ENCODE measurements at regions of chr5 and their contacts with region 1.

Region 1: GRCh38 chr5:134145779-134146581 is 30.8 kb downstream of the SKP1 start:
- DNase-seq: peak; percentile 61 to 93 (median 85)
- ATAC-seq: peak; percentile 88
- H3K4me3 ChIP-seq: no peak overlapping the region
- H3K4me1 ChIP-seq: no peaks in the 10 kb centered on the region
- CTCF ChIP-seq: peak; percentile 97

Region 2: DNA sequence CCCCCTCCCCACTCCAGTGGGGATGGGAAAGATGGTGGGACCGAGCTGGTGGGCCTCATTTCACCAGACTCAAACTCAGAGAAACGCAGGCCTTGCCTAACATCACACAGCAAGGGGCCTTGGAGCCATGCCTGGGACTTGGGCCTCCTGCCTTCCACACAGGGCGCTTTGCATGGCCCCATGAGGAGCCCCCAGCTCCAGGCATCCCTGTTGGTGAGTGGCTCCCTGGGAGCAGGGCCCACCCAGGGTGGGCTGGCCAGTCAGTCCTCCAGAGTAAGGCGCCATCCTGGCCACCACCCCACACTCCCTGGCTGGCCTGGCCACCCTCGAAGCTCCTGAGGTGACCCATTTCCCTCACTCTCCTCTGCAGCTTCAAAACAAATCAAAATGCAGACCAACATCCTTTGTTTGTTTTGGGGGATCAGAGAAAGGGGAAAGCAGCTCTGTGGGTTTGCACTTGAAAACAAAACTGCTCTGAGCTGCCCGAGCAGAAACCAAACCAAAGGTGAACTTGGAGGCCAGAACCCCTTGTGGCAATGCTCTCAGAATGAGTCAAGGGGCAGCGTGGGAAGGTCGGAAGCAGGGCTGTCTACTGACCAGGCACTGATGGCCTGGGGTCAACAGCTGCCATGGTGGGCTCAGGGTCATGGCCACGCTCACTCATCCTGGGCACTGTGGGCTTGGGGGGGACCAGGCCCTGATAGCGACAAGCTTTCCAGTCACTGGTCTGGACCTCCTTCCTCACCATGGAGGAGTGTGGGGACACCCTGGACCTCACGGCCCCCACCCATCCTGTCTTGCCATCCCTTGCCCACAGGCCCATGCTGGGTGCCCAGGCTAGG is 104.2 kb before region 1 on chr5:
- intact Hi-C with region 1: loop called (anchors 10 kb)
- DNase-seq: no peak
- ATAC-seq: no peak
- H3K4me3 ChIP-seq: no peak overlapping the region
- H3K4me1 ChIP-seq: no peaks in the 10 kb centered on the region
- CTCF ChIP-seq: no peak

Region 3: DNA sequence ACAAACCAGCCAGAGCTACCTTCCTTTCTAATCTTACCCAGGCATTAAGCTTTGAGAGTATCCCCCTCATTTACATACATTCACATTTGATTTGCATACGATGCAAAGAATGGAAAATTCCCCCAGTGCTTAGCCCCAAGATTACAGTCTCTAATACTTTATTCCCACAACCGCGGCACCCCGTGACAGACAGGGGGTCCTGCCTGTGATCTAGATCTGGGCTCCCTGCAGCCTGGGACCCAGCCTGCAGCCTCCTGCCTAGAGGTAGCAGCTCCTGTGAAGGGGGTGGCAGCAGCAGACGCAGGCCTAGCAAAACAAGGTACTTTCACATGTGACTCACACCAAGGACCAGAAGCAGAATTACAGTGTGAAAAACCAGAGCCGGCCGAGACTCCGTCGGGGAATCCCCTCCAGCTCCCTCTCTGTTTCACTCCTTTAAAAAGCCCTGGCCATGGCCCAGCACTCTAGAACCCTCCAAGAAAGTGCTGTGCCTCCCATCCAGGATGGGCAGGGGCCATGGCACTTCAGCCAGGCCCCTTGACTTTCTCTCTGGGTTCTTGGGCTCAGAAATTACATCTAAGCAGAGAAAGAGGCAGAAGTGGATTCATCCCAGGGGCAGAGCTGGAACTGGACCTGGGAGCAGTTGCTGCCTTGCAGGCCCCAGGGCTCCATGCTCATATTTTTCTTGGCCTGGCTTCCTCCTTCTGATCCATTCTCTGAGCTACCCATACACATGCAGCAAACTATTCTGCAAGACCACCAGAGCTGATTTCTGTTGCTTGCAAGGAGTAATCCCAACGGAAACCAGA is 45.5 kb before region 1 on chr5:
- intact Hi-C with region 1: no loop called
- DNase-seq: peak; percentile 38 to 69 (median 51)
- ATAC-seq: peak; percentile 67
- H3K4me3 ChIP-seq: no peak overlapping the region
- H3K4me1 ChIP-seq: peaks cover 4% of the 10 kb centered on the region
- CTCF ChIP-seq: no peak

Region 4: GRCh38 chr5:134195666-134196065 is 49.7 kb after region 1 on chr5:
- intact Hi-C with region 1: no loop called
- DNase-seq: no peak
- ATAC-seq: no peak
- H3K4me3 ChIP-seq: no peak overlapping the region
- H3K4me1 ChIP-seq: no peaks in the 10 kb centered on the region
- CTCF ChIP-seq: no peak

Region 5: DNA sequence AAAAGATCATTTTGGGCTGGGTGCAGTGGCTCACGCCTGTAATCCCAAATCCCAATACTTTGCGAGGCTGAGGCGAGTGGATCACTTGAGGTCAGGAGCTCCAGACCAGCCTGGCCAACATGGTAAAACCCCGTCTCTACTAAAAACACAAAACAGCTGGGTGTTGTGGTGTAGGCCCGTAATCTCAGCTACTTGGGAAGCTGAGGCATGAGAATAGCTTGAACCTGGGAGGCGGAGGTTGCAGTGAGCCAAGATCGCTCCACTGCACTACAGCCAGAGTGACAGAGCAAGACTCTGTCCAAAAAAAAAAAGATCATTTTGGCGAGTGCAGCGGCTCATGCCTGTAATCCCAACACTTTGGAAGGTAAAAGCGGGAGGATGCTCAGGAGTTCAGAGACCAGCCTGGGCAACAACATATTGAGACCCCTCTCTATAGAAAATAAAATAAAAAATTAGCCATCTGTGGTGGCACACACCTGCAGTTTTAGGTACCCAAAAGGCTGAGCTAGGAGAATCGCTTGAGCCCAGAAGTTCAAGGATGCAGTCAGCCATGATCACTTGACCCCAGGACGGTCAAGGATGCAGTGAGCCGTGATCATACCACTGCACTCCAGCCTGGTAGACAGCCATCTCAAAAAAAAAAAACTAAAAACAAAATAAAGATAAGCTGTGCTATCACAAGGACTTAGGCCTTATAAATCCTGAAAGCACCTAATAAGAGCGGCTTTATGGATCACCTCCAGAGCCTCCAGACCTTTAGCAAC is 63.7 kb after region 1 on chr5:
- intact Hi-C with region 1: no loop called
- DNase-seq: no peak
- ATAC-seq: no peak
- H3K4me3 ChIP-seq: no peak overlapping the region
- H3K4me1 ChIP-seq: no peaks in the 10 kb centered on the region
- CTCF ChIP-seq: no peak